Breast epithelium (tissue), 4 donors: ENCODE measurements at regions of chr18 and their contacts with region 1.

Region 1: GRCh38 chr18:76075777-76076176 is 419.3 kb downstream of the ZNF516 start:
- DNase-seq: no peak
- H3K4me3 ChIP-seq: no peak overlapping the region
- H3K27ac ChIP-seq: no peak overlapping the region
- H3K4me1 ChIP-seq: no peaks in the 10 kb centered on the region
- H3K27me3 ChIP-seq: no peaks in the 10 kb centered on the region
- CTCF ChIP-seq: no peak
- POLR2A ChIP-seq: no peak

Region 2: GRCh38 chr18:75869162-75869561 is 206.6 kb before region 1 on chr18:
- intact Hi-C with region 1: loop called (anchors 5 kb)
- DNase-seq: no peak
- H3K4me3 ChIP-seq: no peak overlapping the region
- H3K27ac ChIP-seq: no peak overlapping the region
- H3K4me1 ChIP-seq: no peaks in the 10 kb centered on the region
- H3K27me3 ChIP-seq: no peaks in the 10 kb centered on the region
- CTCF ChIP-seq: no peak
- POLR2A ChIP-seq: no peak